Common myeloid progenitor, CD34-positive (primary cell): ENCODE measurements at regions of chr11 and their contacts with region 1.

Region 1: DNA sequence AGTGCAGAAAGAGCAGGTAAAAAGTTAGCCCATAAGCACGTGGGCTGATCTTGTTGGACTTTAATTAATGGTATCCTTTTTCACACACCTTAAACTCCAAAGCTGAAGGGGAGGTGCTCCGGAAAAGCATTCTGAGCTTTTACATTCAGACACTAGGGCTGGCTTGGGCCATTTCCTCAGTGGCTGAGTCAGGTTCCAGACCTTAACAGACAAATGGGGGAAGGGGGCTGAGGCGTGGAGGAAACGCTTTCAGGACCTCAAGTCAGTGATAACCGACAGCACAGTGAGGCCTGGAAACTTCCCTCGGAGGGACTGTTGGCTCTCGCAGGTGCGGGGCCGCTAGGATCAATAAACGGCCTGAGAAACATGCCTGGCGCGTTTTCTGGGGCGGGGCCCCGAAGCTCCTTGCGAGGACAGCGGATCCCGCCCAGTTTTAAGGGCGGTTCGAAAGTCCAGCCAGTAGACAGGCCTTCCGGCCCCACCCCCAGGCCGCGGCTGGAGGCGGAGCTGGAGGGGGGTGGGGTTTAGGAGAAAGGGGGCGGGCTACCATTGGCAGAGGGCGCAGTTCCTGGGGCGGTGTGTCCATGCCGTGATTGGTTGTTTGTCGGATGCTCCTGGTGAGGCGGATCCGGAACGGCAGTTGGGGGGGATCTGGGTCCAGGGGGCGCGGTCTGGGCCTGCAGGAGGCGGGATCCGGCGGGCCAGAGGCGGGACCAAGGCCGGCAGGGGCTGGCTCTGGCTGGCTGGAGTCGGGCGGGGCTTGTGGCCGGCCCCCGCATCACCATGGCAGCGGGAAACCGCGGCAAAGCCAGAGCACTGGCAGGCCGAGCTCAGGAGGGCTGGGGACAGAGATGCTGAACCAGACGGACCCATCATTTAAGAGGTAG is 8.0 kb downstream of the C11orf52 start:
- DNase-seq: peak; percentile 97 to 98 (median 97)
- H3K4me3 ChIP-seq: peak overlapping the region; percentile 32 to 87 (median 69)
- H3K27ac ChIP-seq: peak overlapping the region; percentile 1 to 84
- H3K4me1 ChIP-seq: peaks cover 0 to 22% (median 9%) of the 10 kb centered on the region in 4 experiments
- H3K27me3 ChIP-seq: no peaks in the 10 kb centered on the region

Region 2: DNA sequence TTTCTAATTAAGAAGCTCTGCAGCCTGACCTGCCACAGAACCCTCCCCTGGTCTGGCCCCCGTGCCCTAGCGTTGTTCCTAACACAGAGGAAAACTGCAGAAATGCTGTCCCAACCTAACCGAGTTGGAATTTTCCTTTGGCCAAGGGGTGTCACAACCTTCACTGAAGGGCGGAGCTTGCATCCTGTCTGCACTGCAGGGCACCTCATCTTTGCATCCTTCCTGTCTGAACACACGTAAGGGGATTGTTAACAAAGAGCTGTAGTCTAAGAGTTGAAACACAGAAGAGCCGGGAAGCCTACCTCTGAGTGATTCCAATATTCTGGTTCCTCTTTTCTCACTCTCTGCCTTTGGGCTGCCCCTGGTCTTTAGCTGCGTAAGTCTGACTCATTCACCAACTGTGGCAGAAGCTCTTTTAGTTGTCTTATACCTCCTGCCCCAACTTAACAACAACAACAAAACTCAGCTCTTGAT is 12.0 kb after region 1 on chr11:
- CTCF ChIA-PET with region 1: interaction called, 21 read pairs
- POLR2A ChIA-PET with region 1: no interaction called
- DNase-seq: peak; percentile 66 to 91 (median 89)
- H3K4me3 ChIP-seq: peak overlapping the region in 5 of 7 experiments; percentile 4 to 89 (median 35)
- H3K27ac ChIP-seq: peak overlapping the region in 1 of 2 experiments; percentile 63
- H3K4me1 ChIP-seq: peaks cover 6 to 50% (median 34%) of the 10 kb centered on the region in 4 experiments
- H3K27me3 ChIP-seq: no peaks in the 10 kb centered on the region